ENCODE measurements at regions of chr2 and their contacts with region 1.

Region 1: DNA sequence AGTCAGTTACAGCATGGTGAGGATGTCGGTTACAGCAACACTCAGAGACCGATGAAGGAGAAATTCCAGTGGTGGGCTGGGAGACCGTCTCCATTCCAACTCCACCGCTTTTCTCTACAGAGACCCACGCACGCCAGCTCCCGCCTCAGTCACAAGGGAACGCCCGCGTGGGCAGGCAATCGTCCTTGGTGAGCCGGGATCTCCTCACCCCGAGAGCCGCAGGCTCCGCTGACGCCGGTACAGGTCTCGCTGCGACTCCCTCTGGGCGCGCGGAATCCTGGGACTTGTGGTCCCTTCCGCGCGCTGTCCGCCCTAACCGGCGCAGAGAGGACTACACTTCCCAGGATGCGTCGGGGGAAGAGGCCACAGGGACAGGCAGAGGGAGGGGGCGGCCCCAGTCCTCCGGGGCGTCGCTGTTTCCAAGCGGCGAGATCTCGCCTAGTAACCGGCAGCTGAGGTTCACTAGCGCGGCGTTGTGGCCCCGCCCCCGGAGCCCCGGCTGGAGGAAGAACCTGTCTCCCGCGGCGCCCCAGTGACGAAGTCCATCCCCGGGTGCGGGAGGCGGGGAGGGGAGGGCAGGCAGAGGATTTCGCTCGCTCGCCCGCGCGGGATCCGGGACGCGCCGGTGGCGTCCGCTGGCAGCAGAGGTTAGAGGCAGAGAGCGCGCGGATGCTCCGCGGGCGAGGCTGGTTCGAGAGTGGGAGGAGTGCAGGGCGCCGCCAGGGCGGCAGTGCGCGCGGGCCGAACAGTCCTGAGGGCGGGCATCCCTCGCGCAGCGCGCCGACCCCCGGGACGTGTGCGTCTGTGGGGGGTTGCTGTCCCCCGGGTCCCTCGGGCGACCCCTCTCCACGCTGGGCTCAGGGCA is at the start of gene EML6:
- DNase-seq: peak; percentile 99
- H3K4me3 Mint-ChIP-seq: peak within 1 kb of the TSS; percentile 85
- H3K27ac Mint-ChIP-seq: peak within 1 kb of the TSS; percentile 34
- H3K4me1 Mint-ChIP-seq: peaks cover 12% of the 10 kb centered on the region
- H3K27me3 Mint-ChIP-seq: peaks cover 31% of the 10 kb centered on the region
- total RNA-seq, gene EML6: 0.46 to 0.50 TPM

Region 2: DNA sequence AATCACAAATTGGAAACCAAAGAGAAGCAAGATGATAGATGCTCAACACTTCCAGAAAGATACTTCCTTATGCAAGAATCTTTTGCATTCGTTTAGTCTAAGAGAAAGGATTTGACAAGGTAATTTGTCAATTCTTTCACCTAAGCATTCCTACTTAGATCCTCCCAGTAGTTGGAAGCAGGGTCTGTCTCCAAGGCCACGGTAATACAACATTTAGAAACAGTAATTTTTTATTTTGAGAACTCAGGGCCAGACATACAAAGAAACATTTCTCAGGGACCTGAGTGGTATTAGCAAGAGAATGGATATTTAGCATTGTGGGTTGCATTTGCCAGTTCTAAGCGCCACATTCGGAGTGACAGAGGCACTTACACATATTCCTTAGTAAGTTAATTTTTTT is 539.4 kb before region 1 on chr2:
- CTCF ChIA-PET with region 1: no interaction called
- POLR2A ChIA-PET with region 1: no interaction called
- intact Hi-C with region 1: no loop called
- DNase-seq: no peak
- H3K4me3 Mint-ChIP-seq: no peak overlapping the region
- H3K27ac Mint-ChIP-seq: no peak overlapping the region
- H3K4me1 Mint-ChIP-seq: no peaks in the 10 kb centered on the region
- H3K27me3 Mint-ChIP-seq: no peaks in the 10 kb centered on the region

Region 3: GRCh38 chr2:54330162-54330925 is 393.0 kb before region 1 on chr2:
- CTCF ChIA-PET with region 1: no interaction called
- POLR2A ChIA-PET with region 1: no interaction called
- intact Hi-C with region 1: loop called (anchors 1 kb)
- DNase-seq: peak; percentile 92
- H3K4me3 Mint-ChIP-seq: peak overlapping the region; percentile 75
- H3K27ac Mint-ChIP-seq: peak overlapping the region; percentile 14
- H3K4me1 Mint-ChIP-seq: peaks cover 12% of the 10 kb centered on the region
- H3K27me3 Mint-ChIP-seq: peaks cover 2% of the 10 kb centered on the region

Region 4: DNA sequence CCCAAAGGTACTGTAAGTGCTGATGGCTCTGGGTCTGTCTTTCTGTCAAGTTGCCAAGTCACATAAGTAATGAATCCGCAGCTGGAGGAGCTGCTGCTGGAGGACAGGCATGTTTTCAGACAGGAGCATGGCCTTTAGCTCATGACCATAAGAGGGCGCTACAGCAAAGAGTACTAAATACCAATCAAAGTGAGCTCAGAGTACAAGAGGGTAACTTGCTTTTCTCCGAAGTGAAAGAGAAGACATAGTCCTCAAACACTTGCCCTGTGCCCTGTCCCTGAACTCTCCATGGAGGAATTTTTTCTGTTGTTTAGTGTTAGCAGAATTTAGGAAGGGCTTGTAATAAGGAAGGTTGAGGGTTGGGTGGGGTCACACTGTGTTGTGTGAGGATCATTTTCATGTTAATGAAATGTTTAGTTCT is 57.9 kb before region 1 on chr2:
- CTCF ChIA-PET with region 1: interaction called, 20 read pairs
- POLR2A ChIA-PET with region 1: no interaction called
- intact Hi-C with region 1: no loop called
- DNase-seq: peak; percentile 53
- H3K4me3 Mint-ChIP-seq: no peak overlapping the region
- H3K27ac Mint-ChIP-seq: no peak overlapping the region
- H3K4me1 Mint-ChIP-seq: peaks cover 2% of the 10 kb centered on the region
- H3K27me3 Mint-ChIP-seq: no peaks in the 10 kb centered on the region

Region 5: GRCh38 chr2:54763636-54764291 is 40.4 kb after region 1 on chr2:
- CTCF ChIA-PET with region 1: no interaction called
- POLR2A ChIA-PET with region 1: no interaction called
- intact Hi-C with region 1: loop called (anchors 2 kb)
- DNase-seq: peak; percentile 51
- H3K4me3 Mint-ChIP-seq: no peak overlapping the region
- H3K27ac Mint-ChIP-seq: no peak overlapping the region
- H3K4me1 Mint-ChIP-seq: peaks cover 8% of the 10 kb centered on the region
- H3K27me3 Mint-ChIP-seq: peaks cover 2% of the 10 kb centered on the region

Region 6: DNA sequence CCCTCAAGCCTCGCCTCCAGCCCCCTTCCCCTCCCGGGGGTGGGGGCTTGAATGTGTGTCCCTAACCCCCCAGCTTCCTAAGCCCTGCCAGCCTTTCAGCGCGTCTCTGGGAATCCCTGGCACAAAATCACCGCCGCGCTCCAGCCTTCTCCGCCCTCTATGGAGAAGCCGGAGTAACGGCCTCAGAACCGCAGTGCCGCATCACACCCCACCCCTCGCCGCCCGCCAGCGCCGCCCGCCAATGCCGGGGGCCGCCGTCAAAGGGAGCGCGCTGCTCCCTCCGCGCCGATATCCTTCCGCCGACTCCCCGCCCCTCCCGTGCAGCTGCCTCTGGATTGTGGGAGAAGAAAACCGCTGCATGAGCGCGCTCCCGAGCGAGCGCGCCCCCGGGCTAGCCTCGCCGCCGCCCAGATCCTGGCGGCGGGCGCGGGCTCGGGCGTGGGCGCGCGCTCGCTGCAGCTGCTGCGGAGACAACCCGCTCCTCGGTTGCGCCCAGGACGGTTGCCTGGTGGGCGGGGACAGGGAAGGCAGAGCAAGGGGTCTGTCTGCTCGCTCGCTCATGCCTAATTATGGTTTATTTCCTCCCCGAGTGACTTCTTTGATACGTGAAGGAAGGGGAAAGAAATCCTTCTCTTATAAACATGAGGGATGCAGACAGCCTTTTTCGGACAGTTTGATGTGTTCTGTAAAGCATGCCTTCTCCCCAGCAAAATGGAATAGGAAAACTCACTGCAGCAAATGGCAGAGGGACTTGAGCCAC is 696.5 kb after region 1 on chr2 and contains the start of gene CCDC88A:
- CTCF ChIA-PET with region 1: no interaction called
- POLR2A ChIA-PET with region 1: no interaction called
- intact Hi-C with region 1: loop called (anchors 5 kb)
- DNase-seq: peak; percentile 92
- H3K4me3 Mint-ChIP-seq: peak within 1 kb of the TSS; percentile 81
- H3K27ac Mint-ChIP-seq: peak within 1 kb of the TSS; percentile 69
- H3K4me1 Mint-ChIP-seq: peaks cover 23% of the 10 kb centered on the region
- H3K27me3 Mint-ChIP-seq: peaks cover 4% of the 10 kb centered on the region
- total RNA-seq, gene CCDC88A: 13.2 to 14.1 TPM

Measured in activated CD4-positive, alpha-beta memory T cell treated with anti-CD3 and anti-CD28 coated beads for 36 hours (primary cell).